HCT116 (cell line): ENCODE measurements at regions of chr11 and their contacts with region 1.

Region 1: DNA sequence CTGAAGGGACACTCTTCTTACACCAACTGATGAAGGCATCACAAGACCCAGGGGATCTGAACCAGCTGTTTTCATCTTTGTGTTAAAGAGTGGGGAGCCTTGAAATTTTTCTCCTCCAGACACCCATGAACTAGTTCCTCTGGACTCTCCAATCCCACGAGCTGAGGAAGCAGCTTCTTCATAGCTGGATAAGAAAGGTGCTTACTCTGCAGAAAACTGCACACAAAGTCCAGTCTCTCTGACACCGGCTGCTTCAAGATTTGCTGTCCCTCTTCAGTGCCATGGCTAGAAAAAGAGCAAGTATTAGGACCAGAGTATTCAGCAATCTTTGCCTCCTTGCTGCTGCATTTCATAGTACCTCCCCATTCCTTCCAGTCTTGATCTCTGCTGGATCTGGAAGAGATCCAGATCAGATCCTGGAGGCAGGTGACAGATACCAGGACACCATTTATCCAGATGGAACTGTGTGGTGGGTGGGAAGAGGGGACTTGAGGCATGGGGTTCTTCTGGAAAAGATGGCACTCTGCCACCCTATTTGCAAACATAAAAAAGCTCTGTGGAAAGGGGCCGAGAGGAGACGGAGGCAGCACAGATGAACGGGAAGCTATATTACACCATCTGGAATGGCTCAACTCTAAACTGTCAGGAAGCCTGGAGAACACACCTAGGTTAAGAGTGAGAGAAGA is 25.5 kb downstream of the IL18BP start:
- DNase-seq: no peak
- ATAC-seq: no peak
- H3K4me3 ChIP-seq: no peak overlapping the region
- H3K27ac ChIP-seq: no peak overlapping the region
- H3K4me1 ChIP-seq: peaks cover 0 to 5% of the 10 kb centered on the region in 2 experiments; a peak in 1 of 4 replicates
- H3K27me3 ChIP-seq: no peaks in the 10 kb centered on the region
- CTCF ChIP-seq: no peak
- POLR2A ChIP-seq: no peak
- RAD21 ChIP-seq: no peak

Region 2: GRCh38 chr11:72040726-72041441 is 16.7 kb after region 1 on chr11:
- CTCF ChIA-PET with region 1: interaction called, 10 read pairs
- POLR2A ChIA-PET with region 1: no interaction called
- RAD21 ChIA-PET with region 1: no interaction called
- intact Hi-C with region 1: no loop called
- DNase-seq: peak; percentile 72
- ATAC-seq: peak; percentile 67
- H3K4me3 ChIP-seq: peak overlapping the region; percentile 57 to 63
- H3K27ac ChIP-seq: peak overlapping the region; percentile 83
- H3K4me1 ChIP-seq: peaks cover 24 to 53% of the 10 kb centered on the region in 2 experiments
- H3K27me3 ChIP-seq: no peaks in the 10 kb centered on the region
- CTCF ChIP-seq: no peak; a peak in 1 of 6 replicates
- POLR2A ChIP-seq: no peak
- RAD21 ChIP-seq: no peak

Region 3: GRCh38 chr11:72072348-72072747 is 48.1 kb after region 1 on chr11:
- CTCF ChIA-PET with region 1: interaction called, 11 read pairs
- POLR2A ChIA-PET with region 1: no interaction called
- RAD21 ChIA-PET with region 1: interaction called in 1 of 2 experiments, 14 read pairs
- intact Hi-C with region 1: no loop called
- DNase-seq: peak; percentile 59
- ATAC-seq: peak; percentile 77
- H3K4me3 ChIP-seq: peak overlapping the region; percentile 13 to 36
- H3K27ac ChIP-seq: peak overlapping the region; percentile 76
- H3K4me1 ChIP-seq: peaks cover 48 to 65% of the 10 kb centered on the region in 2 experiments
- H3K27me3 ChIP-seq: no peaks in the 10 kb centered on the region
- CTCF ChIP-seq: no peak
- POLR2A ChIP-seq: no peak
- RAD21 ChIP-seq: 0 out of 2 replicates have a peak, but pooled peaks have one; percentile 13

Region 4: DNA sequence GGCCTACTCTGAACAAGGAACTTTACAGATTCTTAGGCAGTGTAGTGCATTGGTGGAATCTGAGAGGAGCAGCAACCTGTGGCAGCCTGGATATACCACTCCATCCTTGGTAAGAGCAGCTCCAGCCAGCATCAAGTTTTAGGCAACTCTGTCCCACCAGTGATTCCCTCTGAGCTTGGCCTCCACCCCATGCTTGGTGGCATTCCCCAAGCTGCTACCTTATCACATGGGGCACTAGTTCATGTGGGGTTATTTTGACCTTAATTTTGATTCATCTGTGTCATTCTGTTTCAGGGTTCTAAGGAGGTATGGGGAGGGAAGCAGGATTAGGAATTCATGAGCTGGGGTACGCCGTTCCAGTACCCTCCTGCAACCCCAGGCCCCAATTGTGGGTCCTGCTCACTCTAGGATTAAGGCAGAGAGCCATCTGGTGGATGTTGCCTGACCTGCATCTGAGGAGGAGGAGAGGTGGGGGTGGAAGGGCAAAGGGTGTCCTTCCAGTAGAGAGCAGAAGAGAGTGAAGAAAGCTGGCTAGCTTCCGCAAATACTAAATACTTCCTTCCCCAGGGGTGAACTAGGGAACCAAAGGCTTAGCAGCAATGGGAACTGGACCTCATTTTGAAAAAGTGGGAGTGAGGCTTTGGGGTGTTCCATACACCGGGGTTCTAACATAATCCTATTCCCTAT is 66.9 kb after region 1 on chr11:
- CTCF ChIA-PET with region 1: interaction called, 67 read pairs
- POLR2A ChIA-PET with region 1: interaction called, 5 read pairs
- RAD21 ChIA-PET with region 1: interaction called, 6 to 19 read pairs
- intact Hi-C with region 1: loop called (anchors 1 kb)
- DNase-seq: no peak
- ATAC-seq: peak; percentile 97
- H3K4me3 ChIP-seq: no peak overlapping the region
- H3K27ac ChIP-seq: no peak overlapping the region
- H3K4me1 ChIP-seq: peaks cover 0 to 5% of the 10 kb centered on the region in 2 experiments; a peak in 1 of 4 replicates
- H3K27me3 ChIP-seq: no peaks in the 10 kb centered on the region
- CTCF ChIP-seq: peak; percentile 83 to 97 (median 88)
- POLR2A ChIP-seq: no peak
- RAD21 ChIP-seq: peak; percentile 89

Region 5: DNA sequence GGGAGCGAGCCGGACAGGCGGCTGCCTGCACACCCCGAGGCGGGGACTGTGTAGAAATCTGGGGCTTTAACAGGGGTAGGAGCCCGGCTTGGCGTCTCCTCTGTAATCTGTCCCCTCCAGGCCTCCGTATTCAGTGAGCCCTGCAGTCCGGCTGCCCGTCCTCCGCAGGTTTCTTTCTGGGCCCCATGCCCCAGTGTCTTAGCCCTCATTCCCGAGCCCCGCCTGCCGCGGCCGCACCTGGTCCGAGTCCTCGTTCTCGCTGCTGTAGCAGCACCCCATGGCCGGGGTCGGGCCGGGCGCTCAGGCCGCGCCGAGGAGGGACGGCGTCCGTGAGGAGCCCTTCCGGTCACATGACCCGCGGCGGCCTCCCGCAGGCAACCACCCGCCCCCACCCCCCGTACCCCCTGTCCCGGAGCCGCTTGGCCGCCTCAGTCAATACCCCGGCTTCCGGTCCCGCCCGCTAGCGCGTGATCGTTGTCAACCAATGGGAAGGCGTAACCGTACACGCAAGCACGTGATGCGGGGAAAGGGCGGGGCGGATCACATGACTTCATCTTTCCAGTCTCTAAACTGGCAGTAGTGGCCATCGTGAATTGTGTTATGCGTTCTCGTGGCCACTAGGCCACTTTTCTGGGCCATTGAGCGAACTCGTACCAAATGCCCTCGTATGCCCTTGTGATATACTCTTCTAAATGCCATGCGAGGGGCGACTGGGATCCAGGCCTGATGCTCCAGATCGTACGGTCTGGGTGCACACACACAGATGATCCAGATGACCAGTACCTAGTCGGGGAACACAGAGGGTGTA is 78.9 kb after region 1 on chr11 and contains the start of gene LAMTOR1:
- CTCF ChIA-PET with region 1: interaction called, 10 read pairs
- POLR2A ChIA-PET with region 1: no interaction called
- RAD21 ChIA-PET with region 1: no interaction called
- intact Hi-C with region 1: no loop called
- DNase-seq: peak; percentile 98
- ATAC-seq: peak; percentile 95
- H3K4me3 ChIP-seq: peak within 1 kb of the TSS; percentile 89 to 99
- H3K27ac ChIP-seq: peak within 1 kb of the TSS; percentile 80
- H3K4me1 ChIP-seq: peaks cover 11 to 18% of the 10 kb centered on the region in 2 experiments; a peak in 3 of 4 replicates
- H3K27me3 ChIP-seq: no peaks in the 10 kb centered on the region
- CTCF ChIP-seq: peak in 2 of 3 experiments; percentile 28 to 41; a peak in 1 of 6 replicates
- POLR2A ChIP-seq: no peak
- RAD21 ChIP-seq: no peak
- total RNA-seq, gene LAMTOR1: 63.9 TPM

Region 6: GRCh38 chr11:72179804-72180396 is 155.7 kb after region 1 on chr11:
- CTCF ChIA-PET with region 1: interaction called, 13 read pairs
- POLR2A ChIA-PET with region 1: interaction called, 3 read pairs
- RAD21 ChIA-PET with region 1: interaction called in 1 of 2 experiments, 4 read pairs
- intact Hi-C with region 1: loop called (anchors 1 kb)
- DNase-seq: no peak
- ATAC-seq: no peak
- H3K4me3 ChIP-seq: no peak overlapping the region
- H3K27ac ChIP-seq: no peak overlapping the region
- H3K4me1 ChIP-seq: peaks cover 0 to 8% of the 10 kb centered on the region in 2 experiments; a peak in 2 of 4 replicates
- H3K27me3 ChIP-seq: peaks cover 7% of the 10 kb centered on the region; the same call in 1 of the 2 replicates
- CTCF ChIP-seq: no peak
- POLR2A ChIP-seq: no peak
- RAD21 ChIP-seq: no peak